Motor neuron (in vitro differentiated cells): ENCODE measurements at regions of chr16 and their contacts with region 1.

Region 1: GRCh38 chr16:17467923-17468540 is 2.7 kb downstream of the XYLT1 start:
- ATAC-seq: peak; percentile 29 to 73 (median 57)
- H3K4me3 ChIP-seq: peak overlapping the region; percentile 9 to 93 (median 81)
- H3K27ac ChIP-seq: no peak overlapping the region
- H3K4me1 ChIP-seq: peaks cover 22 to 24% of the 10 kb centered on the region in 2 donors

Region 2: DNA sequence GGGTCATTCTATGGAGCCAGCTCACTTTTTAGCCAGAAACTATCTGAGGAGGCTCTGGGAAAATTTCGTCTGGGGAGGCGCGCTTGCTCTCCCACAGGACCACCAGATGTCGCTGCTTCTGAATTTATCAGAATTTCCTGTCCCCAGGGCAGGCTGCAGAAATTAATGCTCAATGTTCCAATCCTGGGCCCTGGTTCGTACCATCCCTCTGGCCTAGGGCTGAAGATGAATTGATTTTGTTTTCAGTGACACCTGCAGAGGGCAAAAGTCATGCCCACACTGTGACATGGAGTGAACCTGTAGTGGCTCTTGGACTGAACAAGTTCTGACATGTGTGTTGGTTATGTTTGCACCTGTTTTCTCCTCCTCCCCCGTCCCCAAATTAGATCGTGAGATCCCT is 606.5 kb before region 1 on chr16:
- in situ Hi-C with region 1: loop called in 3 of 9 experiments (anchors 10 to 25 kb)
- ATAC-seq: peak; percentile 48 to 82 (median 59)
- H3K4me3 ChIP-seq: no peak overlapping the region
- H3K27ac ChIP-seq: no peak overlapping the region
- H3K4me1 ChIP-seq: no peaks in the 10 kb centered on the region

Region 3: GRCh38 chr16:17070882-17071592 is 397.0 kb before region 1 on chr16:
- in situ Hi-C with region 1: loop called in 1 of 9 experiments (anchors 25 kb)
- ATAC-seq: peak in 7 of 8 experiments; percentile 48 to 77 (median 67)
- H3K4me3 ChIP-seq: no peak overlapping the region
- H3K27ac ChIP-seq: no peak overlapping the region
- H3K4me1 ChIP-seq: peaks cover 2 to 10% of the 10 kb centered on the region in 2 donors

Region 4: GRCh38 chr16:17194190-17194780 is 273.7 kb before region 1 on chr16:
- in situ Hi-C with region 1: loop called in 1 of 9 experiments (anchors 25 kb)
- ATAC-seq: peak in 3 of 8 experiments; percentile 30 to 61 (median 31)
- H3K4me3 ChIP-seq: no peak overlapping the region
- H3K27ac ChIP-seq: no peak overlapping the region
- H3K4me1 ChIP-seq: no peaks in the 10 kb centered on the region

Region 5: GRCh38 chr16:17224879-17225281 is 243.2 kb before region 1 on chr16:
- in situ Hi-C with region 1: loop called in 1 of 9 experiments (anchors 25 kb)
- ATAC-seq: peak in 2 of 8 experiments; percentile 60 to 63
- H3K4me3 ChIP-seq: no peak overlapping the region
- H3K27ac ChIP-seq: no peak overlapping the region
- H3K4me1 ChIP-seq: peaks cover 6 to 11% of the 10 kb centered on the region in 2 donors

Region 6: DNA sequence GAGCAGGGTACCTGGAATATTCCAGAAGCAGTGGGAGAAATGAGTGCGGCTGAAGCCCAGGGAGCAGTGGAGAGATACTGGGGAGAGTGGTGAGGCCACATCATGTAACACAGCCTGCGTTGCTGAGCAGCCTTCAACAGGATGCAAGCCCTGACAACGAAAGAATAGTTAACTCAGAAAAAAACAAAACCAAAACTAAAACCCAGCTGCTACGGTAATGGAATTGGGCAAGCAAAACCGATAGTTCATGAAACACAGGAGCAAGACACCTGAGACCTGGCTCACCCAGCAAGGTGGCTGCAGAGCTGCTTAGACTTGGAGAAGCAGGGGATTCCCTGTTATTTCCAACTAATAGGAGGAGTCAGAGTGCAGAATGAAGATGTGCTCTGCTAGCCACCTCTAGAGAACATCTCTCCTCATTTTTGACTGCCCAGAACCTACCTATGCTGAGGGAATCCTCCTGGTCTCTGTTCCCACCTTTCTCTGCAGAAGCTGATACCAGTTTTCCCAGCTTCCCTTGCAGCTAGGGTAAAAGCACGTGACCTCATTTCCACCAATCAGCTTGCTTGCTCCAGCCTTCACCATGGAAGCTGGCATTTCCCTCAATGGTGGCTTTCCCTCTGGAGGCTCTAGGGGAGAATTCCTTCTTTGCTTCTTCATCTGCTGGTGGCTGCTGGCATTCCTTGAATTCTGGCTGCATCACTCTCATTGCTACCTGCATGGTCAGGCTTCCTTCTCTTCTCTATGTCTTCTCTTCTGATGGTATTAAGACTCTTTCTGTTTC is 62.1 kb after region 1 on chr16:
- in situ Hi-C with region 1: no loop called
- ATAC-seq: no peak
- H3K4me3 ChIP-seq: no peak overlapping the region
- H3K27ac ChIP-seq: no peak overlapping the region
- H3K4me1 ChIP-seq: no peaks in the 10 kb centered on the region

Region 7: DNA sequence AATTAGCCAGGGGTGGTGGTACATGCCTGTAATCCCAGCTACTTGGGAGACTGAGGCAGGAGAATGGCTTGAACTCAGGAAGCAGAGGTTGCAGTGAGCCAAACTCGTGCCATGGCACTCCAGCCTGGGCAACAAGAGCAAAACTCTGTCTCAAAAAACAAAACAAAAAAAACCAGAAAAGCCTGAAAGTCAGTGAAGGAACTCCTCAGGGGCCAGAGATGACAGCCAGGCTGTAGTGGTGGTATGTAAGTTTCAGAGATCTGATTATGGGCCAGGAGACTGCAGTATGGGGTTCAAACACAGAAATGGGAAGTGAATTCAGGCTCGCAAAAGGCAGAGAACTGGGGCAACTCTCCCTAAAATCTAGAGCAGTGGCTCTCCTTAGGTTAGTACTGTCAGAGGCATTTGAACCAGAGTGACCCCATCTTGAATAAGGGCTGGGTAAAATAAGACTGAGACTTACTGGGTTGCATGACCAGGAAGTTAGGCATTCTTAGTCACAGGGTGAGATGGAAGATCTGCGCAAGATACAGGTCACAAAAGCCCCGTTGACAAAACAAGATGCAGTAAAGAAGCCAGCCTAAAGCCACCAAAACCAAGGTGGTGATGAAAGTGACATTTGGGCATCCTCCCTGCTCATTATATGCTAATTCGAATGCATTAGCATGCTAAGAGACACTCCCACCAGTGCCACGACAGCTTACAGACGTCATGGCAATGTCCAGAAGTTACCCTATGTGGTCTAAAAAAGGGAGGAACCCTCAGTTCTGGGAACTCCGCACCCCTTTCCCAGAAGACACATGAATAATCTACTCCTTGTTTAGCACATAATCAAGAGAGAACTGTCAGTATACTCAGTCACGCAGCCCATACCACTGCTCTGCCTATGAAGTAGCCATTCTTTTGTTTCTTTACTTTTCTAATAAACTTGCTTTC is 123.0 kb after region 1 on chr16:
- in situ Hi-C with region 1: no loop called
- ATAC-seq: peak in 3 of 8 experiments; percentile 67 to 94 (median 92)
- H3K4me3 ChIP-seq: no peak overlapping the region
- H3K27ac ChIP-seq: no peak overlapping the region
- H3K4me1 ChIP-seq: peaks cover 0 to 4% of the 10 kb centered on the region in 2 donors